ENCODE measurements at regions of chr2 and their contacts with region 1.

Region 1: DNA sequence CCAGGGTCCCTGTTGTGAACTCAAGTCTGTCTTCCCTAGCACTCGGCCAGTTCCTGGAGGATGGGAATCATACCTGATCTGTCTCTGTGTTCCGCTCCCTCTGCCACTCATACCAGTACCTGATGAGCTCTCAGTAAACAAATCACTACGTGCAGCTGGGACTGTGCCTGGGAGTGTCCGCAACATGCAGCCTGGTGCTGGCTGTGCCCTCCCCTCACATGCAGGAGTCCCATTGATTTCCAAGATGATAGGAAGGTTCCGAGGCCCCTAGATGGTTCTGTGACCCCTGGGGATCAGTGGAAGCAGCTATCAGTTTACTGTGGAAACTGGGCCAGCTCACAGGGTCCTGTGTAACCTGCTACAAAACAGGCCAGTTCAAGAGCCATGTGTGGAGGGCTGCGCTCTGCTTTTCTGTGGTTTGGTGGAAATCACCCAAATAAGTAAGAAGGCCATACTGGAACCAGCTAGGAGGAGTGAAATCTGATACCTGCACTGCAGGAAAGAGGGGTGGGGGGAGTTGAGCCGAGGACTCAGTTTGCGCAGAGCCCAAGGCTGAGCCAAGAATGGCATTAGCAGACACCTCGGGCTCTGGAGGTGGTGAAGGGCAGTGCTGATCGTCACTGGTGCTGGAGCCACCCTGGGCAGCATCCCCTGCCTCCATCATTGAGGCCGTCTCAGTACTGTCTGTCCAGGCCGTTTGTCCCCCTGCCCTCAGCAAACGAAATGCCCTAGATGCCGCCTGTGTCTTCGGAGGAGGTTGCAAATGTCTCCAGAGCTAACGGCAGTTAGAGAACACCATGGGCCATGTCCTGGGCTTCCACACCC is 93.3 kb downstream of the KLHL29 start:
- DNase-seq: no peak
- CTCF ChIP-seq: no peak

Region 2: GRCh38 chr2:23183733-23184132 is 294.6 kb before region 1 on chr2:
- CTCF ChIA-PET with region 1: no interaction called
- POLR2A ChIA-PET with region 1: no interaction called
- DNase-seq: no peak
- CTCF ChIP-seq: no peak

Region 3: DNA sequence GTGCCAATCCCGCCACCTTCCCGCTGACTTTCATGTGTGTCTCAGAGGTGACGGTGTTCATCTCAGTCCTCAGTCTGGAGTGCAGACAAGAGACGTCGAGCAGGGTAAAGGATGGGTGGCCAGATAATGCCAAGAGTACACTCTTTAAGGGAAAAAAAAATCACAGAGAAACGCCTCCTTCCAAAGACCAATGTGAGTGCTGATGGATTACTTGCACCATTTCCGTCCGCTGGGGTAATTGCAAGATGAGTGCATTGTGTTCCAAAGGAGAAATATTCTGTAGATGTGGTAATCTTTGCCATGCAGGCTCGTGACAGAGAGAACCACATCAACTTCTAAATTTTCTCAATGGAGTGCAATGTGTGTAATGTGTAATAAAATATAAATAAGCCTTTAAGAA is 12.4 kb before region 1 on chr2:
- CTCF ChIA-PET with region 1: interaction called, 15 read pairs
- POLR2A ChIA-PET with region 1: no interaction called
- DNase-seq: no peak
- CTCF ChIP-seq: no peak

Region 4: GRCh38 chr2:23505218-23505983 is 27.1 kb after region 1 on chr2:
- CTCF ChIA-PET with region 1: no interaction called
- POLR2A ChIA-PET with region 1: no interaction called
- DNase-seq: no peak
- CTCF ChIP-seq: no peak

Region 5: DNA sequence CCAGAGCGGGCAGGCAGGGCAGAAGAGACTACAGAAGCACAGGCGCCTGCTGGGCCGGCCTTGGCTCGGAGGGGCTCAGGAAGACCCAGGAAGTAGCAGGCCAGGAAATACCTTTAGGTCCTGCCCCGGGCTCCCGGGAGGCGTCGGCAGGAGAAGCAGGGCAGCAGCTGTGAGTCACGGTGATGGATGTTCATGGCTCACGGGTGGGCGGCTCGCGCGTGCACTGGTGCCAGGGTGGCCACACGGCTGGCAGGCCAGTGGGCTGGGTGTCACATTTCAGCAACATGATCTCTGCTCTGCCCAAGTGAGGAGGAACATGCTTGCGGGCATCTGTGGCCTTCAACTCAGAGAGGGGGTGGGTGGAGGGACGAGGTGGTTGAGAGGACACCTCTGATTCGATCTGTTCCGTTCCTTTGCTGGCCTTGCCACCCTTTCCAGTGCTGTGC is 46.0 kb after region 1 on chr2:
- CTCF ChIA-PET with region 1: no interaction called
- POLR2A ChIA-PET with region 1: no interaction called
- DNase-seq: no peak
- CTCF ChIP-seq: no peak

Region 6: GRCh38 chr2:23967846-23968245 is 489.5 kb after region 1 on chr2:
- CTCF ChIA-PET with region 1: no interaction called
- POLR2A ChIA-PET with region 1: no interaction called
- DNase-seq: no peak
- CTCF ChIP-seq: no peak

Measured in GM10248 (cell line).